Transverse colon (tissue), 4 donors: ENCODE measurements at regions of chr1 and their contacts with region 1.

Region 1: GRCh38 chr1:147762233-147763024 is 2.0 kb upstream of the GJA5 start:
- DNase-seq: no peak
- H3K4me3 ChIP-seq: no peak overlapping the region
- H3K27ac ChIP-seq: no peak overlapping the region
- H3K4me1 ChIP-seq: no peaks in the 10 kb centered on the region
- H3K27me3 ChIP-seq: no peaks in the 10 kb centered on the region
- CTCF ChIP-seq: no peak
- EP300 ChIP-seq: no peak
- POLR2A ChIP-seq: no peak

Region 2: GRCh38 chr1:147201276-147201675 is 561.2 kb before region 1 on chr1:
- in situ Hi-C with region 1: no loop called
- intact Hi-C with region 1: loop called (anchors 10 kb)
- DNase-seq: no peak
- H3K4me3 ChIP-seq: no peak overlapping the region
- H3K27ac ChIP-seq: no peak overlapping the region
- H3K4me1 ChIP-seq: no peaks in the 10 kb centered on the region
- H3K27me3 ChIP-seq: no peaks in the 10 kb centered on the region
- CTCF ChIP-seq: no peak
- EP300 ChIP-seq: no peak
- POLR2A ChIP-seq: no peak